Naive thymus-derived CD4-positive, alpha-beta T cell (primary cell): ENCODE measurements at regions of chr11 and their contacts with region 1.

Region 1: GRCh38 chr11:96389720-96390487 is at the starts of genes CCDC82 and JRKL:
- DNase-seq: peak; percentile 96 to 99 (median 98)
- ATAC-seq: peak; percentile 99
- H3K4me3 ChIP-seq: peak within 1 kb of the TSS; percentile 66
- H3K4me3 Mint-ChIP-seq: peak within 1 kb of the TSS; percentile 84 to 99 (median 94)
- H3K27ac ChIP-seq: peak within 1 kb of the TSS; percentile 86
- H3K27ac Mint-ChIP-seq: peak within 1 kb of the TSS; percentile 71 to 97 (median 91)
- H3K4me1 ChIP-seq: peaks cover 17 to 18% of the 10 kb centered on the region in 2 donors
- H3K4me1 Mint-ChIP-seq: peaks cover 32 to 66% (median 60%) of the 10 kb centered on the region in 7 donors
- H3K27me3 ChIP-seq: no peaks in the 10 kb centered on the region
- H3K27me3 Mint-ChIP-seq: no peaks in the 10 kb centered on the region
- total RNA-seq, gene CCDC82: 21.9 to 46.2 (median 32.0) TPM
- total RNA-seq, gene JRKL: 5.4 to 17.3 (median 10.1) TPM

Region 2: GRCh38 chr11:95089620-95090542 is 1300.0 kb before region 1 on chr11 and contains the start of gene ENDOD1:
- CTCF ChIA-PET with region 1: no interaction called
- POLR2A ChIA-PET with region 1: no interaction called
- intact Hi-C with region 1: loop called (anchors 1 kb)
- DNase-seq: peak; percentile 81 to 89 (median 87)
- ATAC-seq: peak; percentile 98
- H3K4me3 ChIP-seq: peak within 1 kb of the TSS; percentile 79
- H3K4me3 Mint-ChIP-seq: peak within 1 kb of the TSS; percentile 86 to 95 (median 92)
- H3K27ac ChIP-seq: peak within 1 kb of the TSS; percentile 87
- H3K27ac Mint-ChIP-seq: peak within 1 kb of the TSS; percentile 96 to 99 (median 98)
- H3K4me1 ChIP-seq: peaks cover 16 to 31% of the 10 kb centered on the region in 2 donors
- H3K4me1 Mint-ChIP-seq: peaks cover 24 to 61% (median 49%) of the 10 kb centered on the region in 7 donors
- H3K27me3 ChIP-seq: no peaks in the 10 kb centered on the region
- H3K27me3 Mint-ChIP-seq: no peaks in the 10 kb centered on the region
- total RNA-seq, gene ENDOD1: 4.7 to 23.2 (median 8.6) TPM

Region 3: GRCh38 chr11:95652002-95652472 is 737.9 kb before region 1 on chr11:
- CTCF ChIA-PET with region 1: no interaction called
- POLR2A ChIA-PET with region 1: no interaction called
- intact Hi-C with region 1: no loop called
- DNase-seq: no peak
- ATAC-seq: no peak
- H3K4me3 ChIP-seq: no peak overlapping the region
- H3K4me3 Mint-ChIP-seq: no peak overlapping the region
- H3K27ac ChIP-seq: no peak overlapping the region
- H3K27ac Mint-ChIP-seq: no peak overlapping the region
- H3K4me1 ChIP-seq: no peaks in the 10 kb centered on the region
- H3K4me1 Mint-ChIP-seq: peaks cover 0 to 18% (median 6%) of the 10 kb centered on the region in 7 donors
- H3K27me3 ChIP-seq: no peaks in the 10 kb centered on the region
- H3K27me3 Mint-ChIP-seq: no peaks in the 10 kb centered on the region

Region 4: GRCh38 chr11:95849087-95849825 is 540.6 kb before region 1 on chr11:
- CTCF ChIA-PET with region 1: interaction called, 20 read pairs
- POLR2A ChIA-PET with region 1: no interaction called
- intact Hi-C with region 1: loop called in 1 of 2 experiments (anchors 1 kb)
- DNase-seq: peak in 6 of 9 donors; percentile 2 to 39 (median 19)
- ATAC-seq: peak; percentile 64
- H3K4me3 ChIP-seq: no peak overlapping the region
- H3K4me3 Mint-ChIP-seq: no peak overlapping the region
- H3K27ac ChIP-seq: no peak overlapping the region
- H3K27ac Mint-ChIP-seq: peak overlapping the region in 2 of 9 donors; percentile 11 to 49
- H3K4me1 ChIP-seq: no peaks in the 10 kb centered on the region
- H3K4me1 Mint-ChIP-seq: no peaks in the 10 kb centered on the region
- H3K27me3 ChIP-seq: no peaks in the 10 kb centered on the region
- H3K27me3 Mint-ChIP-seq: no peaks in the 10 kb centered on the region

Region 5: GRCh38 chr11:96012086-96012824 is 377.6 kb before region 1 on chr11:
- CTCF ChIA-PET with region 1: interaction called, 6 read pairs
- POLR2A ChIA-PET with region 1: interaction called, 6 read pairs
- intact Hi-C with region 1: loop called (anchors 1 kb)
- DNase-seq: peak in 8 of 9 donors; percentile 23 to 89 (median 80)
- ATAC-seq: peak; percentile 83
- H3K4me3 ChIP-seq: no peak overlapping the region
- H3K4me3 Mint-ChIP-seq: peak overlapping the region; percentile 58 to 87 (median 71)
- H3K27ac ChIP-seq: peak overlapping the region; percentile 58
- H3K27ac Mint-ChIP-seq: peak overlapping the region in 6 of 9 donors; percentile 76 to 98 (median 96)
- H3K4me1 ChIP-seq: peaks cover 39 to 52% of the 10 kb centered on the region in 2 donors
- H3K4me1 Mint-ChIP-seq: peaks cover 12 to 50% (median 28%) of the 10 kb centered on the region in 7 donors
- H3K27me3 ChIP-seq: no peaks in the 10 kb centered on the region
- H3K27me3 Mint-ChIP-seq: no peaks in the 10 kb centered on the region

Region 6: DNA sequence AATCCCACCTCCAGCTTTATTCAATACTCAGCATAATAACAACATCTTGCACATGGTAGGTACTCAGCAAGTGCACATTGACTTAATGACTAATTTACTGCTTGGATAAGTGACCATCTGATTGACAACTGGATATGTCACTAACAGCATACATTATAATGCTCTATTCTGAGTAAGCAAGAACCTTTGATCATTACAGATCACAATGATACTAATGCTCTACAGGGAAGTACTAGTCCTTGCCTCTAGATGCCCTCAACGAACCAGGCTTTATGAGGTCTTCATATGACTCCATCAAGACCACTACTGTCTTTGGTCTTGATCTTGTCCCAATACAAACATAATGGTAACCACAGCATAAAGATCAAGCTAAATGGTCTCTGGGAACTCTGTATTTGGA is 298.4 kb before region 1 on chr11:
- CTCF ChIA-PET with region 1: no interaction called
- POLR2A ChIA-PET with region 1: no interaction called
- intact Hi-C with region 1: loop called (anchors 1 kb)
- DNase-seq: peak in 7 of 9 donors; percentile 10 to 46 (median 23)
- ATAC-seq: peak; percentile 88
- H3K4me3 ChIP-seq: no peak overlapping the region
- H3K4me3 Mint-ChIP-seq: peak overlapping the region in 1 of 10 donors; percentile 6
- H3K27ac ChIP-seq: no peak overlapping the region
- H3K27ac Mint-ChIP-seq: peak overlapping the region in 5 of 9 donors; percentile 56 to 81 (median 71)
- H3K4me1 ChIP-seq: peaks cover 0 to 5% of the 10 kb centered on the region in 2 donors
- H3K4me1 Mint-ChIP-seq: peaks cover 30 to 95% (median 59%) of the 10 kb centered on the region in 7 donors
- H3K27me3 ChIP-seq: no peaks in the 10 kb centered on the region
- H3K27me3 Mint-ChIP-seq: no peaks in the 10 kb centered on the region

Region 7: DNA sequence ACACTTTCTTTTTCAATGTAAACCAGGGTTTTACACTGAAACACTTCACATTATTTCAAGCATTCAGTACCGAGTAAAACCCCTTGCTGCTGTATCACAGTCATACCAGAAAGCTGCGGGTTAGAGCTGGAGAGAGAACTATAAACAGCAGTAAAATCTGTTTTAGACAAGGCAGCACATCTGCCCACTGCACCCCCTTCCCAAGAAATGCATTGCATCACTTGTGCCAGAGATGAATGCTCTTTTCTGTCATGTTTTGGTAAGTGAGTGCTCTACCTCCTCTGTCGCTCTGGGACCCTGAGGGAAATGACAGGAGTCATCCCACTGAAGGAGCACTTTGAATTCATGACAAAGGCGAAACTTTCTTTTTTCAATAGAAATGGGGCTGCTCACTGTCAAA is 154.2 kb before region 1 on chr11:
- CTCF ChIA-PET with region 1: no interaction called
- POLR2A ChIA-PET with region 1: no interaction called
- intact Hi-C with region 1: loop called (anchors 5 kb)
- DNase-seq: peak in 1 of 9 donors; percentile 64
- ATAC-seq: peak; percentile 57
- H3K4me3 ChIP-seq: no peak overlapping the region
- H3K4me3 Mint-ChIP-seq: peak overlapping the region in 8 of 10 donors; percentile 9 to 70 (median 39)
- H3K27ac ChIP-seq: peak overlapping the region; percentile 6
- H3K27ac Mint-ChIP-seq: peak overlapping the region in 6 of 9 donors; percentile 38 to 83 (median 64)
- H3K4me1 ChIP-seq: peaks cover 0 to 53% of the 10 kb centered on the region in 2 donors
- H3K4me1 Mint-ChIP-seq: peaks cover 20 to 40% (median 28%) of the 10 kb centered on the region in 7 donors
- H3K27me3 ChIP-seq: no peaks in the 10 kb centered on the region
- H3K27me3 Mint-ChIP-seq: no peaks in the 10 kb centered on the region

Region 8: GRCh38 chr11:96424693-96425092 is 34.8 kb after region 1 on chr11:
- CTCF ChIA-PET with region 1: no interaction called
- POLR2A ChIA-PET with region 1: no interaction called
- intact Hi-C with region 1: loop called (anchors 2 kb)
- DNase-seq: no peak
- ATAC-seq: no peak
- H3K4me3 ChIP-seq: no peak overlapping the region
- H3K4me3 Mint-ChIP-seq: no peak overlapping the region
- H3K27ac ChIP-seq: no peak overlapping the region
- H3K27ac Mint-ChIP-seq: no peak overlapping the region
- H3K4me1 ChIP-seq: no peaks in the 10 kb centered on the region
- H3K4me1 Mint-ChIP-seq: peaks cover 0 to 6% (median 0%) of the 10 kb centered on the region in 7 donors
- H3K27me3 ChIP-seq: peaks cover 0 to 3% of the 10 kb centered on the region in 2 donors
- H3K27me3 Mint-ChIP-seq: peaks cover 27 to 49% (median 44%) of the 10 kb centered on the region in 5 donors